Heart right ventricle (tissue), 16 donors: ENCODE measurements at regions of chr1 and their contacts with region 1.

Region 1: GRCh38 chr1:57986432-57986831 is 560.1 kb downstream of the OMA1 start:
- DNase-seq: no peak
- ATAC-seq: no peak
- H3K4me3 ChIP-seq: no peak overlapping the region
- H3K27ac ChIP-seq: no peak overlapping the region
- H3K4me1 ChIP-seq: no peaks in the 10 kb centered on the region
- H3K27me3 ChIP-seq: peaks cover 0 to 4% (median 0%) of the 10 kb centered on the region in 7 donors
- CTCF ChIP-seq: no peak

Region 2: GRCh38 chr1:57926025-57926552 is 60.3 kb before region 1 on chr1:
- intact Hi-C with region 1: loop called in 1 of 10 experiments (anchors 10 kb)
- DNase-seq: no peak
- ATAC-seq: no peak
- H3K4me3 ChIP-seq: no peak overlapping the region
- H3K27ac ChIP-seq: no peak overlapping the region
- H3K4me1 ChIP-seq: no peaks in the 10 kb centered on the region
- H3K27me3 ChIP-seq: no peaks in the 10 kb centered on the region
- CTCF ChIP-seq: no peak

Region 3: GRCh38 chr1:58047265-58047858 is 60.9 kb after region 1 on chr1:
- intact Hi-C with region 1: no loop called
- DNase-seq: peak; percentile 9 to 27
- ATAC-seq: peak in 2 of 8 donors; percentile 50 to 53
- H3K4me3 ChIP-seq: no peak overlapping the region
- H3K27ac ChIP-seq: no peak overlapping the region
- H3K4me1 ChIP-seq: no peaks in the 10 kb centered on the region
- H3K27me3 ChIP-seq: no peaks in the 10 kb centered on the region
- CTCF ChIP-seq: peak; percentile 22 to 76 (median 68)

Region 4: GRCh38 chr1:58116284-58116683 is 129.9 kb after region 1 on chr1:
- intact Hi-C with region 1: no loop called
- DNase-seq: no peak
- ATAC-seq: no peak
- H3K4me3 ChIP-seq: no peak overlapping the region
- H3K27ac ChIP-seq: no peak overlapping the region
- H3K4me1 ChIP-seq: no peaks in the 10 kb centered on the region
- H3K27me3 ChIP-seq: no peaks in the 10 kb centered on the region
- CTCF ChIP-seq: no peak

Region 5: DNA sequence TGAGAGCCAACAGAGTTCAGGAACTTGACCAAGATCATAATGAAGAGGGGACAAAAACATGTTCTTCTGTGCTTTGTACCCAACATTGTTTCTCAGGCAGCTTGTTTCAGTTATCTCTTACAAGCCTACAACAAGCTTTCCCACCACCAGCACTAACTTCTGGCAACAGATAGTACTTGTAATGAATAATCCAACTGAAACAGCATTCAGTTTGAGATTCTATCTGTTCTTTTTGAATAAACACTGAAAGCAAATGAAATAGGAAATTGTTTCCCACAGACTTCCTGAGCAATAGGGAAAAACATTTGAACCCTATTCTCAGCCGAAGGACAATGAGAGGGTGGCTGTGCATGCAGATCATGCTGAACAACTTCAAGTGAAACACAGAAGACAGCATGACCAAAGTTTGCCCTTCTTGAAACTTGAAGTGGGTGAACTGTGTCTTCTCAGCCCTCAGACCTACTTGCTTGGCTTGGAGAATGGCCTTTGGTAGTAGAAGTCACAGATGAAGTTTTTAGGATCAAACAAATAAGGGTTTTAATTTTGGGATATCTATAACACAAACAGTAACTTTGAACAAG is 1817.1 kb after region 1 on chr1:
- intact Hi-C with region 1: no loop called
- DNase-seq: no peak
- ATAC-seq: no peak
- H3K4me3 ChIP-seq: no peak overlapping the region
- H3K27ac ChIP-seq: no peak overlapping the region
- H3K4me1 ChIP-seq: no peaks in the 10 kb centered on the region
- H3K27me3 ChIP-seq: no peaks in the 10 kb centered on the region
- CTCF ChIP-seq: no peak